ENCODE measurements at regions of chr7 and their contacts with region 1.

Region 1: DNA sequence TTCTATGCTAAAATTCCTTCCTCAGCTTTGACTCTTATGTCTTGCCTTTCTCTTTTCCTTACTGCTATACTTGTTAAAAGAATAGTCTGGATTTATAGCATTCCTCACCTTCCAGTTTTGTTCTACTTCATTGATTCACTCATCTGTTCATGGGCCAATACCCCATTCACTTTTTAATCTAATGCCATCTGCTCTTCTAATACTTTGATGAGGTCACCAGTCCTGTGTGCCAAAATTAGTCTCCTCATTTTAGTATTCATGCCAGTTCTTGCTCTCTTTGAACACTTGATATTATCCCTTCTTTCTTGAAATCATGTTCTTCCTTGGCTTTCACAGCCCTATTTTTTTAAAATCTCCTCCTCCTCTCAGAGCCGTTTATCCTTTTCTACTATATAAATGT is 19.4 kb downstream of the STK17A start:
- DNase-seq: no peak
- H3K4me3 ChIP-seq: no peak overlapping the region
- H3K4me1 ChIP-seq: peaks cover 4% of the 10 kb centered on the region; the same call in 1 of the 2 replicates
- H3K27me3 ChIP-seq: no peaks in the 10 kb centered on the region

Region 2: GRCh38 chr7:42911454-42912447 is 690.5 kb before region 1 on chr7 and contains the start of gene C7orf25:
- in situ Hi-C with region 1: no loop called
- DNase-seq: peak; percentile 88 to 96
- H3K4me3 ChIP-seq: peak within 1 kb of the TSS; percentile 39
- H3K4me1 ChIP-seq: peaks cover 5% of the 10 kb centered on the region
- H3K27me3 ChIP-seq: no peaks in the 10 kb centered on the region

Region 3: DNA sequence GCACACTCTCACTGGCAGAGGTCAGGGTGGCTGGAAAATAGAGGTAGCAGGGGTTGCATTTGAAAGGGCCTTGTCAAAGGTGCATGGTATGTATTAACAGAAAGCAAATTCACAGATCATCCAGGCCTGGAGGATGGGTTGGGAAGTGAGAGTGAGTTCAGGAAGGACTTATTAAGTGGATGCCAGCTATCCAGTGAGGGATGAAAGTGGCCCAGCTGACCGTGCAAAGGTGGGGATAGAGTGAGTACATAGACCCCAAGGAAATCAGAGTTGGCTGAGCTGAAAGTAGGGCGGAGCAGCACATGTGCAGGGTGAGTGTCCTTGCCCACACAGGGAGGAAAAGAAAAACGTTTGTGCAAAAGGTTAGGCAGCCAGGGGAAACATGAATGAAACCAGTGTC is 431.7 kb before region 1 on chr7:
- in situ Hi-C with region 1: no loop called
- DNase-seq: no peak
- H3K4me3 ChIP-seq: no peak overlapping the region
- H3K4me1 ChIP-seq: no peaks in the 10 kb centered on the region
- H3K27me3 ChIP-seq: peaks cover 6% of the 10 kb centered on the region; the same call in 1 of the 2 replicates

Region 4: DNA sequence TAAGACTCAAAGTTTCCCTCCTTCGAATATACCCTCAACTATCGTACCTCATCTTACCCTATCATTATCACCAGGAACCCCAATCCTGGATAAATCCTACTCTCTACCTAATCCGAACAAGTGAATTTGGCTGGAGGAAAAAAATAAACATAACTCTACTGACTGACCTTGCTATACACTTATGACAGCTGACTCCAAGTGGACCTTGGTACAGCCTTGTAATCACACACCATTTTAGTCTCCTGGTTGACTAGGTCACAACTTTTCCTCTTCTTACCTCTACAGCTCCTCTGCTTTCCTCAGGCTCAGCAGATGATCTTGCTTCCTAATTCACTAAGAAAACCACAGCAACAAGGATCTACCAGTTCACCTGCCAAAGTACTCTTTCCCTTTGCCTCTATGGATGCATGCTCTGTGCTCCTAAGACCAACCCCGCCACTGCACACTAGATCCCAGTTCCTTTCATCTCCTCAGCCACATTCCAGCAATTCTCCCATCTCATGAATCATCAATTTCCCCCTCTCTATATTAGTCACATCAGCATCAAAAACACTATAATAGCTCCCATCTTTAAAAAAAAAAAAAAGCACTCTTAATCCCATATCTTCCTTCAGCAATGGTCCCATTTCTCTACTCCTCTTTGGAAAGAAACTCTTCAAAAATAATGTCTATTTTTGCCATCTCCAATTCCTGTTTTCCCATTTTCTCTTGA is 91.6 kb after region 1 on chr7:
- in situ Hi-C with region 1: loop called (anchors 10 kb)
- DNase-seq: no peak
- H3K4me3 ChIP-seq: no peak overlapping the region
- H3K4me1 ChIP-seq: peaks cover 7% of the 10 kb centered on the region
- H3K27me3 ChIP-seq: no peaks in the 10 kb centered on the region